ENCODE measurements at regions of chr6 and their contacts with region 1.

Region 1: DNA sequence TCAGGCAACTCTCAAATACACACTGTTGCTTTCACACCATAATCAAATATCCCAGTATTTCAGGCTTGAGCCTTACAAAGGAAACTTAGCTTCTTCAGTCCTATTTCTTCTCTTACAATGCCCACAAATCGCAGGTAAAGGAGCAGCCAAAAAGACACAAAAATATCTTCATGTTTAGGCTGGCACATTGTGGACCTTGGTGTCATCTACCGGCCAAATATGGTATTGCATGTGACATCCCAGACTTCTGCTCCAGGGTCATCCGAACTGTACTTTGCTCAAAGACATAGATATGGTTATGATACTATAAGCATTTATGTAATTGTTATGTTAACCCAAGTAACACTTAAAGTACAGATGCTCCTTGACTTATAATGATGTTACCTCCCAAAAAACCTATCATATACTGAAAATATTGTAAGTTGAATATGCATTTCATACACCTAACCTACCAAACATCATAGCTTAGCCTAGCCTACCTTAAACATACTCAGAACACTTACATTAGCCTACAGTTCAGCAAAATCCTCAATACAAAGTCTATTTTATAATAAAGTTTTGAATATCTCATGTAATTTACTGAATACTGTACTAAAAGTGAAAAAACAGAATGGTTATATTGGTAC is 4.6 kb downstream of the OR2H2 start:
- DNase-seq: peak in 1 of 2 donors; percentile 7
- ATAC-seq: no peak
- H3K4me3 ChIP-seq: no peak overlapping the region
- H3K27ac ChIP-seq: no peak overlapping the region
- H3K4me1 ChIP-seq: no peaks in the 10 kb centered on the region
- H3K27me3 ChIP-seq: peaks cover 0 to 9% (median 0%) of the 10 kb centered on the region in 3 donors
- CTCF ChIP-seq: peak; percentile 62 to 87 (median 72)
- POLR2A ChIP-seq: no peak

Region 2: DNA sequence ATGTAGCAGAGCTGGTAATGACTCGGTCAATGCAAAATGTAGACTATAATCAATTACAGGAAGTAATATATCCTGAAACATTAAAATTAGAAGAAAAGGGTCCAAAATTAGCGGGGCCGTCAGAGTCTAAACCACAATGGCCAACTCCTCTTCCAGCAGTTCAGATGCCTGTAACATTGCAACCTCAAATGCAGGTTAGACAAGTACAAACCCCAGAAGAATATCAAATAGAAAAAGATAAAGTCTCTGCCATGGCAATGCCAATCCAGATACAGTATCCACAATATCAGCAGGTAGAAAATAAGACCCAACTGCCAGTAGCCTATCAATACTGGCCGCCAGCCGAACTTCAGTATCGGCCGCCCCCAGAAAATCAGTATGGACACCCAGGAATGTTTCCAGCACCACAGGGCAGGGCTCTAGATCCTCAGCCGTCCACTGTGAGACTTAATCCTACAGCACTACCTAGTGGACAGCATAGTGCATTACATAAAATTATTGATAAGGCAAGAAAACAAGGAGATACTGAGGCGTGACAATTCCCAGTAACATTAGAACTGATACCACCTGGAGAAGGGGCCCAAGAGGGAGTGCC is 905.5 kb before region 1 on chr6:
- in situ Hi-C with region 1: loop called (anchors 10 to 25 kb)
- intact Hi-C with region 1: loop called (anchors 5 kb)
- DNase-seq: no peak
- ATAC-seq: no peak
- H3K4me3 ChIP-seq: no peak overlapping the region
- H3K27ac ChIP-seq: no peak overlapping the region
- H3K4me1 ChIP-seq: no peaks in the 10 kb centered on the region
- H3K27me3 ChIP-seq: peaks cover 4 to 23% (median 7%) of the 10 kb centered on the region in 3 donors
- CTCF ChIP-seq: peak in 2 of 5 experiments; percentile 10 to 33
- POLR2A ChIP-seq: no peak

Region 3: DNA sequence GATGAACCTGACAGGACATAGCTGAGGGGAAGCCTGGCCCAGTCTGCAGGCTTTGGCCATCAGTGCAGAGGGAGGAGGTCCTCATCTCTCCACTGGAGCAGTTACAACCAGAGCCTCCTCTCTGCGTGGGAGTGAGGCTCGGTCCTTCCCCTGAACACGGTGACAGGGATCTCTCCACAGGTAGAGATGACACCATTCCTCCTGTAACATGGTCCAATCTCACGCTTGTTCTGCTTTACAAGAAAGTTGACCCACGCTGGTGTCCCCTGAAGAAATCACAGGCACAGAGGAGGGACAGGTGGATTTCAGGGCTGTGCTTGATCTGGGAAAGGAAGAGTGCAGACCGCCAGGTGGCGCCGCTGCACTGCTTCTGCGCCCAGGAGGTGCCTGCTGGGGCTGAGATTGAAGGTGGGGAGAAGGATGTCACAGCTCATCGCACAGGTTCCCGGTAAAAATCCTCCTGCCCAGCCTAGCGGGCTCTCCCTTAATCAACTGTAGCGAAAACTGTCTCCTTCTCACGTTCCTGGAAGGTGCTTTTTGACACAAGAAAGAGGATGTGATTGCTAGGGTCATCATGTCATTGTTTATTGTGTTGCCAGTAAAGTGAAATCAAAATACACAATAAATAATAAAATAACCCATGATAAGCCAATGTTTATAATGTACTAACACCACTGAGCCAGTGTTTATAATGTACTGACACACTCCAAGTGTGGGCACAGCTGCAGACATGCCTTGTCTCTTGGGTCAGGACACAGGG is 258.5 kb after region 1 on chr6:
- in situ Hi-C with region 1: no loop called
- intact Hi-C with region 1: no loop called
- DNase-seq: peak; percentile 41 to 61
- ATAC-seq: peak; percentile 72 to 89
- H3K4me3 ChIP-seq: no peak overlapping the region
- H3K27ac ChIP-seq: no peak overlapping the region
- H3K4me1 ChIP-seq: peaks cover 0 to 4% of the 10 kb centered on the region in 2 donors
- H3K27me3 ChIP-seq: peaks cover 14 to 28% (median 26%) of the 10 kb centered on the region in 3 donors
- CTCF ChIP-seq: peak; percentile 91 to 93 (median 93)
- POLR2A ChIP-seq: no peak

Region 4: DNA sequence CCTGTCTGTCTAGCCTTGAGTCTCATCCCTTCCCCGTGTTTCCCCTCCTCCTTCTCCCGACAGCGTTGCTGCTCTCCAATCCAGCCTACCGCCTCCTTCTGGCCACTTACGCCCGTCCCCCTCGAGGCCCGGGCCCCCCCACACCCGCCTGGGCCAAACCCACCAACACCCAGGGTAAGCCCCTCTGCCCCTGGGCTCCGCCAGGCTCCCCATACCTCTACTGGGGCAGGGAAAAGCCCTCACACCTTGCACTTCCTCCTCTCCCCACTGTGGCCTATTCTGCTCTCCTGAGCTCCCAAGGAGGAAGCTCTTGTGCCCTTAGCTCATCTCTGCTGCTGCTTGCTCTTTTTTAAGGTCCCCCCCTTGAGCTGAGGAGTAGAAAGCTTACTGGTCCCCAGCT is 1305.8 kb after region 1 on chr6:
- in situ Hi-C with region 1: no loop called
- intact Hi-C with region 1: no loop called
- DNase-seq: no peak
- ATAC-seq: no peak
- H3K4me3 ChIP-seq: no peak overlapping the region
- H3K27ac ChIP-seq: no peak overlapping the region
- H3K4me1 ChIP-seq: no peaks in the 10 kb centered on the region
- H3K27me3 ChIP-seq: no peaks in the 10 kb centered on the region
- CTCF ChIP-seq: no peak
- POLR2A ChIP-seq: no peak